GM18951 (cell line): ENCODE measurements at regions of chr13 and their contacts with region 1.

Region 1: DNA sequence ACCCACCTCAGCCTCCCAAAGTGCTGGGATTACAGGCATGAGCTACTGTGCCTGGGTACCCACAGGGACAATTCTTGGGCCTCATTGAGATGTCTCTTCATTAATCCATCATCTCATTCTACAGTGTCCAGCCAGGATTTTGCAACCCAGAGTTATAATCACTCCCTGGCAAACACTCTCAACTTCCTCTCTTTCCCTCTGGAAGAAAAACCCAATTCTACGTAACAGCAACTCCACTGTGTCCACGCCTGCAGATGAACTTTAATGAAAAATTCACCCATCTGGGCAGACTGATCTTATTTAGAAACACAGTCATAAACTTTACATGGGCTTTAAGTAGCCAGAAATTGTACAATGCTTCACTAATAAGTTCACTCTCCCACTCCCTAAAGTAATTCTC is 90.1 kb upstream of the ABCC4 start:
- POLR2A ChIP-seq: no peak

Region 2: GRCh38 chr13:95191821-95192563 is 199.4 kb before region 1 on chr13:
- in situ Hi-C with region 1: loop called (anchors 10 kb)
- POLR2A ChIP-seq: no peak

Region 3: GRCh38 chr13:95323930-95324662 is 67.3 kb before region 1 on chr13:
- in situ Hi-C with region 1: no loop called
- POLR2A ChIP-seq: no peak

Region 4: DNA sequence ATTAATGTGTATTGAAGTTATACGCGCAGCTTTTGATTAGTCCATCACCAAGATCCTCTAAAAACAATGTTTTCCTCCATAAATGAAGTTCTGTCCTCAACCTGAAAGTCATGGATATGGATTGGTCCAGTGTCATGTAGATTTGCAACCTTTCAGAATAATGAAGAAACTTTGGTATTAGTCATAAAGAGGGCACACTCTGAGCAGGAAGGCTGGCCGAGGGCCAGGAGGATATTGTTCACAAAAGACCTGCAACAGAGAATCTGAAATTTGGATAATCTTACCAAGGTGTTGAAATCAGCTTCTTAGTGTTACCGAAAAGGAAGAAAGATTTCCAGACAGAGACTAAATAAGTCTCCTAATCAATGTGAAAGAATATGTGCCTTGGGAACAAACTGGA is 181.9 kb after region 1 on chr13:
- in situ Hi-C with region 1: no loop called
- POLR2A ChIP-seq: no peak

Region 5: GRCh38 chr13:95924389-95924994 is 533.1 kb after region 1 on chr13:
- in situ Hi-C with region 1: no loop called
- POLR2A ChIP-seq: no peak